ENCODE measurements at regions of chr10 and their contacts with region 1.

Region 1: GRCh38 chr10:16843252-16843870 is 26.1 kb upstream of the RSU1 start:
- DNase-seq: no peak
- ATAC-seq: peak; percentile 49
- H3K4me3 Mint-ChIP-seq: no peak overlapping the region
- H3K27ac Mint-ChIP-seq: no peak overlapping the region
- H3K4me1 Mint-ChIP-seq: no peaks in the 10 kb centered on the region
- H3K27me3 Mint-ChIP-seq: no peaks in the 10 kb centered on the region
- CTCF ChIP-seq: peak; percentile 78

Region 2: DNA sequence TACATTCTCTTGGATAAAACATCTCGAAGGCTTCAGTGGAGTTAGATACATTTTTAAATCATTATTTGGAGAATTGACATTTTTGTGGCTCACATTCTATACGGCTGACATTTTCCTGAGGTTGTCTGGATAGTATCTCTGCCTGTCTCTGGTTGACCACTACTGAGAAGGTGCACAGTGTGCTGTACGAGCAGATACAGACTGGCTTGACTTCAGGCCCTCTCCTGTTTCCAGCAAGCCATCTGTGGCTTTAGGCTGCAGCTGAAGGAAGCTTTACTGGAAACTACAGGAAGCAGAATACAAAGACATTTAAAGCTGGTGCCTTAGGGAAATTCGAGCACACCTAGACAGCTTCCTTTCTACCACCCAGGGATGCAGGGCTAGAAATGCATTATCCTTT is 13.2 kb after region 1 on chr10:
- CTCF ChIA-PET with region 1: interaction called, 12 read pairs
- POLR2A ChIA-PET with region 1: no interaction called
- intact Hi-C with region 1: no loop called
- DNase-seq: no peak
- ATAC-seq: no peak
- H3K4me3 Mint-ChIP-seq: no peak overlapping the region
- H3K27ac Mint-ChIP-seq: no peak overlapping the region
- H3K4me1 Mint-ChIP-seq: no peaks in the 10 kb centered on the region
- H3K27me3 Mint-ChIP-seq: no peaks in the 10 kb centered on the region
- CTCF ChIP-seq: no peak

Measured in activated CD8-positive, alpha-beta T cell treated with anti-CD3 and anti-CD28 coated beads for 36 hours (primary cell).